ENCODE measurements at regions of chr12 and their contacts with region 1.

Region 1: DNA sequence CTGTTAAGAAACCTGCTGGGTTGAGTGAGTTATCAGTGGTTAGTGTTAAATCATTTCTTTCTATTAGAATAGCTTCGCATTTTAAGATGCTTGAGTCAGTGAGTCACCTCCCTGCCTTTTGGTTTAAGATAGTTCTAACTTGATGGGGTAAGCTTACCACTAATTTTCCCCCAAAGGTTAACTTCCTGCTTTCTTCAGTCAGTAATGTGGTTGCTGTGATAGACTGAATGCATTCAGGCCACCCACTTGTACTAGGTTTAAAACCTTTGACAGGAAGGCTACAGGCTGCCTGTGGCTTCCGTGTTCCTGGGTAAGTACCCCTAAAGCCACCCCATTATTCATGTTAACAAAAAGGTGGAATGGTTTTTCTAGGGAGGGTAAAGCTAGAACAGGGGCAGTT is 25.3 kb downstream of the CLEC2A start:
- DNase-seq: peak in 1 of 2 donors; percentile 33
- H3K4me3 ChIP-seq: no peak overlapping the region
- H3K27ac ChIP-seq: no peak overlapping the region
- H3K4me1 ChIP-seq: no peaks in the 10 kb centered on the region
- H3K27me3 ChIP-seq: no peaks in the 10 kb centered on the region
- CTCF ChIP-seq: no peak
- EP300 ChIP-seq: no peak
- POLR2A ChIP-seq: no peak

Region 2: DNA sequence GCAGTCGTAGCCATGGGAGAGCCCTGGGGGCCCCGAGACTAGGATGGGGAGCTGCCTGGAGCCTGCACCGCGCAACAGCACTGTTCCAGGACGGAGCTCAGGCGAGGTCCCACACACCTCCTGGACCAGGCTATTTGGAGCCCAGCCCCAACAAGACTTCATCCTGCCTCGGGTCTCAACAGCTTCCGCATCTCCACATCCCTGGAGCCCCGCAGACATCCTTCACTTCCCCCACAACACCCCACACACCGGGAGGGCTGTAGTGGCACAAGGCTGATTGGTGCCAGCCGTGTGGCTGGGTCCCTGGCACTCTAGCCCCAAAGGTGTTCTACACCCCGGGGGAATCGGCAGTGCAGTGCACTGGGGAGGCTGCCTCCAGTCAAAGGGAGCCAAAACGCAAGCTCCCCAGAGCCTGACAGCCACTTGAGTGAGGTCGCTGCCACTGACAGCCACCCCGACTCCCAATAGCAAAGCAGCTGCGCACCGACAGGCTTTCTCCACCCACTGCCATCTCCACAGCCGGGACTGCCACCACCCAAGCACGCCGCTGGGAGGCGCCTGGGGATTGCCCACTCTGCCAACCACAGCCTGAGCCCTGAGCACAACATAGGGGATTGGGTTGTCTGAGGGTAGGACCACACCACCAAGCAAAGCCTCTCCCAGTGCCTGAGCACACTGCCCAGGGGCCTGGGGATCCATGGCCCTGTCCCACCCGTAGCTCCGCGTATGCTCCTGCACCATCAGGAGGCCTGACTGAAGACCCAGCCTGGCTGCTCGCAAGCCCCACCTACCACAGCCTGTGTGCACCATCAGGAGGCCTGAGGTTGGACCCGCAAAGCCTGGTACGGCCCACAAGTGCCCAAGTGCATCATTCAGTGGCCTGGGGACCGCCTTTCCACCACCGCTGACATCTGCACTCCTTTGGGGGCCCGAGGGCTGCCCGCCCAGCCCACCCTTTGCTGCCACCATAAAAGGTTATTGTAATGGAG is 92.8 kb before region 1 on chr12:
- intact Hi-C with region 1: loop called (anchors 10 kb)
- DNase-seq: peak; percentile 78 to 79
- H3K4me3 ChIP-seq: peak overlapping the region in 3 of 4 donors; percentile 31 to 35 (median 32)
- H3K27ac ChIP-seq: no peak overlapping the region
- H3K4me1 ChIP-seq: peaks cover 0 to 12% (median 2%) of the 10 kb centered on the region in 4 donors
- H3K27me3 ChIP-seq: peaks cover 0 to 17% (median 0%) of the 10 kb centered on the region in 3 donors
- CTCF ChIP-seq: peak in 5 of 7 experiments; percentile 31 to 76 (median 66)
- EP300 ChIP-seq: no peak
- POLR2A ChIP-seq: no peak

Region 3: DNA sequence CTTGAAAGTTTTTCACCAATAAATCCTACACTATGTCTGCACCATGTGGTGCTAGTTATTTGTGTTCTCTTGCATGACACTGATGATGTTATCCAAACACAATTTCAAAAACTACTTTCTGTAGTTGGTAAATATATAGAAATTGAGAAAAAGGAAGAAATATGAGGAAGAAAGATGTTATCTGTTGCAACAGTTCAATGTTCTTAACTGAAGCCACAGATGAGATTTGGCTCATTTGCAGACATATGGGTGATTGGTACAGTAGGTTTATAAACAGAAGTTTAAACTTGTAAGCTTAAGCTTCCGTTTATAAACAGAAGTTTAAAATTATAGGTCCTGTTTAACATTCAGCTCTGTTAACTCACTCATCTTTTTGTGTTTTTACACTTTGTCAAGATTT is 64.3 kb after region 1 on chr12 and contains the start of gene CLEC12A:
- intact Hi-C with region 1: no loop called
- DNase-seq: no peak
- H3K4me3 ChIP-seq: no peak within 1 kb of the TSS
- H3K27ac ChIP-seq: no peak within 1 kb of the TSS
- H3K4me1 ChIP-seq: no peaks in the 10 kb centered on the region
- H3K27me3 ChIP-seq: no peaks in the 10 kb centered on the region
- CTCF ChIP-seq: no peak
- EP300 ChIP-seq: no peak
- POLR2A ChIP-seq: no peak
- total RNA-seq, gene CLEC12A: 0.43 to 1.1 TPM in 2 of 5 donors, not detected in the others

Measured in stomach (tissue), 19 donors.